Gastrocnemius medialis (tissue), 4 donors: ENCODE measurements at regions of chr12 and their contacts with region 1.

Region 1: DNA sequence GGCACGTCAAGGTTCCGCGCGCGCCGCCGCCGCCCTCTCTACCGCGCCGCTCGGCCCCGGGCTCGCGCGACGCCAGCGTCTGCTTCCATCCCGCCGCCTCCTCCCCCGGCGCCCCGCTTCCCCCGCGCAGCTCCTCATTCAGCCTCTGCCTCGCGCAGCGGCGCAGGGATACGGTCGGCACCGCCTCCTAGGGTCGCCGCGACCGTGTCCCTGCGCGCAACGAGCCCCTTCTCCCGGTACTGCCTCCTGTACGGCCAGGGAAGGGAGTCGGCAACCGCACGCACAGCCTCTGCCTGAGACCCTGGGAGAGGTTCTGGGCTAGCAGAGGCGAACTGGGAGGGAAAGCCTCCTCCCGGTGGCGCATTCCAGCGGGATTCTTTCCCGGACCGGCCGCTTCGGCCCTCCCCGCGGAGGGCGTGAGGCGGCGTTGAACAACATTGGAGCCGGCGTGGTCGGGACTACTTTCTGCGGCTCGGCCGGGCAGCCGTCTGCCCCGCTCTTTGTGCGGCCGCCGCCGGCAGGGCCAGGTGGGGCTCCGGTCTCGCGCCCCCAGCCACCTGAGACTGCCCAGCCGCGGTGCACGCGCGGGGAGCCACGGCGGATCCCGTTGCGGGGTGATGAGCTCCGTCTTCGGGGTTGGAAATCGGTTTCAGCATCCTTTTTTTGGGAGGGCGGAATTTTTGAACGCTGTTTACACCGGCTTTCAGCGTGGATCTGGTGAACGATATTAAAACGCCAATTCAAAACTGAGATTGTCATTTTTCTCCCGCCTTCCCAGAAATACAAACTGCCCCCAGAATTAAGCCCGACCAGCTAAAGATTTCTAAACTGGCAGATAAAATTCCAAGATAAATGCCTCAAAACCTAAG is at the start of gene LRP6:
- DNase-seq: peak; percentile 76 to 84
- ATAC-seq: peak; percentile 93 to 94
- H3K4me3 ChIP-seq: peak within 1 kb of the TSS; percentile 76 to 96 (median 86)
- H3K27ac ChIP-seq: peak within 1 kb of the TSS; percentile 90 to 99 (median 98)
- H3K4me1 ChIP-seq: peaks cover 18 to 21% of the 10 kb centered on the region in 2 donors
- H3K27me3 ChIP-seq: no peaks in the 10 kb centered on the region
- CTCF ChIP-seq: peak in 3 of 5 experiments; percentile 21 to 37 (median 32)
- POLR2A ChIP-seq: peak; percentile 68 to 81
- total RNA-seq, gene LRP6: 9.5 to 21.4 (median 14.7) TPM

Region 2: DNA sequence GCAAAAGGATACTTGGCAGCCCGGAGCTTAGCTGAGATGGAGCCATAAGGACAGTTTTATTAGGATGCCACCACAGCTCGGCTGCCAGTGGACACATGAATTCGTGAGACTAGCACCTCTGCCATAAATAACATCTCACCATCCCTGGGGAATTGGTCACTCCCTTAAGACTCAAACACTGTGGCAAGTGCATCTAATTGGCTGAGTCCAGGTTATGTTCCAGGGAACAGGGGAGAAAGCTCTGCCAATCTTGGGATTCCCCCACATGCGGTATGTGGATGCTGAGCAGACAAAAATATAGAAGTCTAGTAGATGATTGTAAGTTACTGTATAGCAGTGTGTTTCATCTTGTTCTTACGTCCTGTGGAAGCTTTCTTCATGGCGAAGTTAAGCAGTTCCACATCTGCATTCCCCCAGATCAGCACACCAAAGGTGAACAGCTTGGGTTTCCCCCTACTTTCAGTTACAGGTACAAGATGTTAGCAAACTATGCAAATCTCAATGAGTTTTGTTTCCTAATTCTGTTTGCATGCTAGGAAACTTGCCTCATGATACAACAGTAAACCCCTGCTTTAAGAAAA is 486.5 kb before region 1 on chr12:
- in situ Hi-C with region 1: no loop called
- intact Hi-C with region 1: loop called (anchors 10 kb)
- DNase-seq: no peak
- ATAC-seq: no peak
- H3K4me3 ChIP-seq: no peak overlapping the region
- H3K27ac ChIP-seq: peak overlapping the region in 2 of 4 donors; percentile 58 to 60
- H3K4me1 ChIP-seq: peaks cover 46 to 48% of the 10 kb centered on the region in 2 donors
- H3K27me3 ChIP-seq: no peaks in the 10 kb centered on the region
- CTCF ChIP-seq: no peak
- POLR2A ChIP-seq: no peak

Region 3: DNA sequence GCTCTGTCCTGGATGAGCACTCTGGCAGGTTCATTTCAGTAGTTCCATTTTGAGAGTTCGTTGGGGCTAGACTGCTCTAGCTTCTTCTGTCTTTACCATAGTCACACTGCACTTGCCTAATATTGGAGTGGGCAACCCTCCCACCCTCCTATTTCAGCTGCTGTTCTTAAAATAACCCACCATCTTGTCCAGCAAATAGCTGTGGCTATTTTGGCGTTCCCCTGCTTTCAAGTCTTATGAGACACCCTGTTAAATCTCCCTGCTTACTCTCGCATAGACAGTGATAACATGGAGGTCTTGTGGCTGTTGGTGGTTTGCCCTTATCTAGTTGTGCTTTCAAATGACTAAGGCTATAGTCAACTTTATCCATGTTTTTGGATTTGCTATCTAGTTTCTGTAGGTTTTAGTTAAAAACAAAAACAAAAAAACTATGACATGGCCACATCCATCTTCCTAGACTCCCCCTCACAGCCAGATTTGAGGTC is 65.8 kb before region 1 on chr12:
- in situ Hi-C with region 1: no loop called
- intact Hi-C with region 1: loop called (anchors 5 kb)
- DNase-seq: peak; percentile 35 to 81
- ATAC-seq: peak; percentile 95 to 97
- H3K4me3 ChIP-seq: peak overlapping the region in 2 of 4 donors; percentile 7 to 14
- H3K27ac ChIP-seq: peak overlapping the region; percentile 71 to 79 (median 74)
- H3K4me1 ChIP-seq: peaks cover 21 to 25% of the 10 kb centered on the region in 2 donors
- H3K27me3 ChIP-seq: no peaks in the 10 kb centered on the region
- CTCF ChIP-seq: no peak
- POLR2A ChIP-seq: peak in 1 of 2 donors; percentile 11

Region 4: GRCh38 chr12:12290206-12290605 is 23.1 kb after region 1 on chr12:
- in situ Hi-C with region 1: no loop called
- intact Hi-C with region 1: no loop called
- DNase-seq: no peak
- ATAC-seq: no peak
- H3K4me3 ChIP-seq: no peak overlapping the region
- H3K27ac ChIP-seq: no peak overlapping the region
- H3K4me1 ChIP-seq: no peaks in the 10 kb centered on the region
- H3K27me3 ChIP-seq: no peaks in the 10 kb centered on the region
- CTCF ChIP-seq: no peak
- POLR2A ChIP-seq: no peak

Region 5: DNA sequence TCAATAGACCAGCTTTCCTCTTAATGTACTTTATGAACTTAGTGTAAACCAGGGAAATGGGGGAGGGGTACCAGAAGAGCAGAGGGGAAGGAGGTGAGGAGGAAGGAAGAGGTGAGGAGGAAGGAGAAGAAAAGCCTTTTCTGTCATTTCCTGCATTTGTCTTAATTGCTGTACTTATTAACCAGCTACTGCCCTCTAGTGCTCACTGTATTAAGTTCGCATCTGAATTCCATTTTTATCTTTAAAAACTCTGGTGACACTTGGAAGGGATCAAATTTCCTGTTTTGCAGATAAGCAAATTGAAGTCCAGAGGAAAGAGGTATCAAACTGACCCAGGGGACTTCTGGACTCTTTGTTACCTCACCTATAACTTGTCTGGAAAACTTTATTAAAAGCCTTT is 60.7 kb after region 1 on chr12:
- in situ Hi-C with region 1: no loop called
- intact Hi-C with region 1: loop called (anchors 5 kb)
- DNase-seq: no peak
- ATAC-seq: no peak
- H3K4me3 ChIP-seq: no peak overlapping the region
- H3K27ac ChIP-seq: no peak overlapping the region
- H3K4me1 ChIP-seq: peaks cover 0 to 5% of the 10 kb centered on the region in 2 donors
- H3K27me3 ChIP-seq: no peaks in the 10 kb centered on the region
- CTCF ChIP-seq: peak; percentile 45 to 70 (median 49)
- POLR2A ChIP-seq: no peak

Region 6: GRCh38 chr12:12356886-12357718 is 90.0 kb after region 1 on chr12 and contains the start of gene BORCS5:
- in situ Hi-C with region 1: no loop called
- intact Hi-C with region 1: loop called (anchors 2 kb)
- DNase-seq: peak; percentile 92 to 96
- ATAC-seq: peak; percentile 95 to 96
- H3K4me3 ChIP-seq: peak within 1 kb of the TSS; percentile 79 to 97 (median 94)
- H3K27ac ChIP-seq: peak within 1 kb of the TSS; percentile 96 to 99 (median 98)
- H3K4me1 ChIP-seq: peaks cover 15 to 16% of the 10 kb centered on the region in 2 donors
- H3K27me3 ChIP-seq: no peaks in the 10 kb centered on the region
- CTCF ChIP-seq: peak in 3 of 5 experiments; percentile 8 to 29 (median 25)
- POLR2A ChIP-seq: peak; percentile 96 to 98
- total RNA-seq, gene BORCS5: 13.0 to 13.9 (median 13.4) TPM

Region 7: DNA sequence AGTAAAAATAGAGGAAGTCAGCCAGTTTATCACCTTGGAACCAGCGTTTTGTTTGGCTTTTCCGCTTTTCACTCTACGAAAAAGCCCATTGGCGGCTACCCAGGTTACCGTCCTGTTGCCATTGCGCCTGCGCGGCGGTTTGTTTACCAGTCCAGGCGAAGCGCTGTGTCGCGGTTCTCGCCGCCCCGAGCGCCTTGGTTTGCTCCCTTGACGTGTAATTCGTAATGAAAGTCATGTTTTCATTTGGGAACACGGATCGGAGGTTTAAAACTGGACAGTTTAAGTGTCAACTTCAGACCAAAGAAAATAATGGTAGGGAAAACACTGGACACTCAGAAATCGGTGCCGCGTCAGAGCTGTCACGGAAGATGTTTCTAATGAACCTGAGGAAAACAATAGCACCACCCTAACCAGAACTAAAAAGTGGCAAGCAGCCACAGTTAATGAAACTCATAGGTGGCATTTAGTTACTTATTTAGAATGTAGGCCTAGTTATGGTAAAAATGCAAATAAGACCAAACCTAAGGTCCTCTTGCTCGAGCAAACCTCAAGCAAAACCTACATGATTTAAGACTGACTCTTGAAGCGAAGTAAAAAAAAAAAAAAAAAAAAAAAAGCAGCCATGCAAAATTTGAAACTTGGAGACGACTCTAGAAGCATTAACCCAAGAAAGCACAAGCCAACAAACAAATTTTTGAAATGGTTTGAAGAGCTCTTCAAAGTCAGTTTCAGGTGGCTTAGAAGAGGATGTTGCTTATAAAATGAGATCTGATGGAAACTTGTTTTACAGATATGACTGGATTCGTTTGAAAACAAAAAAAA is 429.7 kb after region 1 on chr12:
- in situ Hi-C with region 1: no loop called
- intact Hi-C with region 1: loop called (anchors 5 kb)
- DNase-seq: peak; percentile 81 to 86
- ATAC-seq: peak; percentile 93
- H3K4me3 ChIP-seq: peak overlapping the region; percentile 60 to 81 (median 76)
- H3K27ac ChIP-seq: peak overlapping the region; percentile 87 to 98 (median 97)
- H3K4me1 ChIP-seq: peaks cover 5 to 6% of the 10 kb centered on the region in 2 donors
- H3K27me3 ChIP-seq: no peaks in the 10 kb centered on the region
- CTCF ChIP-seq: no peak
- POLR2A ChIP-seq: peak; percentile 65 to 81